ENCODE measurements at regions of chr12 and their contacts with region 1.

Region 1: DNA sequence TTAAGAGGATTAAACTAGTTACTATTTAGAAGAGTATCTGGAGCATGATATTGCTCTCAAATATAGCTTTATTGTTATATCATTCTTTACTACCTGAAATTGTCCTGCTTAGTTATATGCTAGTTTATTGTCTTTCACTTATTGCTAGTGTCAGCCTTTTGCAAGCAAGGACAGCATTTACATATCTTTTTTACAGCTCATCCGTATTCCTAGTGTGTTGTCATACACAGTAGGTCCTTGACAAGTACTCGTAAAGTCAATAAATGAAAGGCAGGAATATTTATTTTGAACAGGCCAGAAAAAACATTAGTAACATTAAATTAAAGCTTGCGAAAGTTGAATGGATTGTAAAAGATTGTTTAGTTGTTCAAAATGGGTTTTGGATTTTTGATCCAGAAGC is 35.0 kb downstream of the CRADD start:
- DNase-seq: no peak
- H3K4me3 ChIP-seq: no peak overlapping the region
- H3K27ac ChIP-seq: no peak overlapping the region
- H3K4me1 ChIP-seq: no peaks in the 10 kb centered on the region
- H3K27me3 ChIP-seq: no peaks in the 10 kb centered on the region
- CTCF ChIP-seq: no peak

Region 2: GRCh38 chr12:93682846-93683261 is 29.3 kb before region 1 on chr12:
- CTCF ChIA-PET with region 1: interaction called, 14 read pairs
- POLR2A ChIA-PET with region 1: no interaction called
- intact Hi-C with region 1: no loop called
- DNase-seq: no peak
- H3K4me3 ChIP-seq: no peak overlapping the region
- H3K27ac ChIP-seq: no peak overlapping the region
- H3K4me1 ChIP-seq: peaks cover 18% of the 10 kb centered on the region
- H3K27me3 ChIP-seq: no peaks in the 10 kb centered on the region
- CTCF ChIP-seq: no peak

Measured in A673 (cell line).